Activated CD8-positive, alpha-beta T cell treated with anti-CD3 and anti-CD28 coated beads, Interleukin-2, amount 10 ng/mL, durations not matched to agents 7 days and 5 days (primary cell): ENCODE measurements at regions of chr12 and their contacts with region 1.

Region 1: GRCh38 chr12:1117970-1118563 is 127.0 kb downstream of the ERC1 start:
- DNase-seq: peak; percentile 81
- ATAC-seq: peak; percentile 43
- H3K4me3 Mint-ChIP-seq: no peak overlapping the region
- H3K27ac Mint-ChIP-seq: no peak overlapping the region
- H3K4me1 Mint-ChIP-seq: peaks cover 13% of the 10 kb centered on the region
- H3K27me3 Mint-ChIP-seq: no peaks in the 10 kb centered on the region

Region 2: DNA sequence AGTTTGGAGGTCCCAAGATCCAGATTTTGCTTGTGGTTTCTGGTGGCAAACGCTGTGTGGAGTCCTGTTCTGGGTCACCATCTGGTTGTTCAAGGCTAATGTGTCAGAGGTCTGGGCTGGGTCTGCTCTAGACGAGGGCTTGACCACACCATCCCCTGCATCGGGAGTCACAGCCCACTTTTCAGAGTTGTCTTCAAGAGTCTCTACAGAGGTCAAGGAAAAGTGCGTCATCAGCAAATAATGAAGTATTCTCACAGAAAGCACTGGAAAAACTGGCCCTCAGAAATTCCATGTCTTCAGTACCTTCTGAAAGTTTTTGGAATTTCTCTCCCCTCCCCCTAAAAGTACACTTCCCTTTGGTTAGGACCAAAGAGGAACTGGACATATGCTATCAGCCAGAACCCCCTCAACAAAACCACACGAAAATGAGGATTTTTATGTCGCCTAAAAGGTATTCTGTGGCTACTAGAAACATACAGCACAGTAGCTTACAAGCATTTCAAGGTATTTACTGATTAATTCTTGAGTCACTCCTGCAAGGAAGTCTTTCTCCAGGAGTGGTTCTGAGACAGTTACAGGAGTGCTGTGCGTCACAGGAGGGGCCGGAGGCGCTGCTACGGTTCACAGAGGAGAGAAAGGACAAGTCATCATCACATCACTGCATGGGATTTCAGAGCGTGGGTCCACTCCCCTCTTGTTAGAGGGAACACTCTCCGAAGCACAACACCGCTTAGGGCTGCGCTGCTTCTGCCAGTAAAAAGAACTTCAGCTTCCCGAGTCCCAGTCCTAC is 204.0 kb before region 1 on chr12:
- CTCF ChIA-PET with region 1: no interaction called
- POLR2A ChIA-PET with region 1: no interaction called
- DNase-seq: no peak
- ATAC-seq: no peak
- H3K4me3 Mint-ChIP-seq: no peak overlapping the region
- H3K27ac Mint-ChIP-seq: peak overlapping the region; percentile 81
- H3K4me1 Mint-ChIP-seq: peaks cover 31% of the 10 kb centered on the region
- H3K27me3 Mint-ChIP-seq: no peaks in the 10 kb centered on the region

Region 3: DNA sequence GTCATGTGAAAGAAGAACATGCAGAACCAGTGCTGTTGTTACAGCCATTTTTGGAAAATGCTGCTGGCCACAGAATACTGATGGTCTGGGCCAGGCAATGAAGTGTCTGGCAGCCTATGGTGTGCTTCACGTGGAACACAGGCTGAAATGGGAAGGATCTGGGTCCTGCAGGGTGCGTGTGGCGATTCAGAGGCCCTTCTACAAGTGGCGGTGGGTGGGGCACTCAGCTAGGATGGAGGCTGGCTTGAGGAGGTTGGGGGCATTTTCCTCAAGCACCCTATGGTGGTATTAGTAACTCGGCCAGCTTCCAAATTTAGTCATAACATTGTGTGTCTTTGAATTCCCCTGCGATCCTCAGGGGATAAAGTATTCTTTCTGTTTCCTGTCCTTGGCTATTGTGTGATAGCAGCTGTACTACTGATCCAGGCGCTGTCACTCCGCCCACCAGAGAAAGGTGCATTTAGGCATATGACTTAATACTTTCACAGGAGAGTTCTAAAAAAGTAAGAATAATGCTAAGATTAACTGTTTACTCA is 159.4 kb before region 1 on chr12:
- CTCF ChIA-PET with region 1: no interaction called
- POLR2A ChIA-PET with region 1: no interaction called
- DNase-seq: no peak
- ATAC-seq: no peak
- H3K4me3 Mint-ChIP-seq: no peak overlapping the region
- H3K27ac Mint-ChIP-seq: no peak overlapping the region
- H3K4me1 Mint-ChIP-seq: peaks cover 9% of the 10 kb centered on the region
- H3K27me3 Mint-ChIP-seq: no peaks in the 10 kb centered on the region

Region 4: GRCh38 chr12:1138691-1139090 is 20.6 kb after region 1 on chr12:
- CTCF ChIA-PET with region 1: interaction called, 12 read pairs
- POLR2A ChIA-PET with region 1: no interaction called
- DNase-seq: no peak
- ATAC-seq: no peak
- H3K4me3 Mint-ChIP-seq: no peak overlapping the region
- H3K27ac Mint-ChIP-seq: no peak overlapping the region
- H3K4me1 Mint-ChIP-seq: no peaks in the 10 kb centered on the region
- H3K27me3 Mint-ChIP-seq: no peaks in the 10 kb centered on the region

Region 5: GRCh38 chr12:1344245-1344644 is 226.2 kb after region 1 on chr12:
- CTCF ChIA-PET with region 1: interaction called, 12 read pairs
- POLR2A ChIA-PET with region 1: no interaction called
- DNase-seq: no peak
- ATAC-seq: no peak
- H3K4me3 Mint-ChIP-seq: no peak overlapping the region
- H3K27ac Mint-ChIP-seq: no peak overlapping the region
- H3K4me1 Mint-ChIP-seq: peaks cover 3% of the 10 kb centered on the region
- H3K27me3 Mint-ChIP-seq: no peaks in the 10 kb centered on the region

Region 6: GRCh38 chr12:1533602-1534304 is 415.7 kb after region 1 on chr12:
- CTCF ChIA-PET with region 1: interaction called, 16 read pairs
- POLR2A ChIA-PET with region 1: no interaction called
- DNase-seq: peak; percentile 74
- ATAC-seq: peak; percentile 67
- H3K4me3 Mint-ChIP-seq: peak overlapping the region; percentile 59
- H3K27ac Mint-ChIP-seq: peak overlapping the region; percentile 56
- H3K4me1 Mint-ChIP-seq: peaks cover 38% of the 10 kb centered on the region
- H3K27me3 Mint-ChIP-seq: peaks cover 69% of the 10 kb centered on the region

Region 7: GRCh38 chr12:1583421-1584078 is 465.5 kb after region 1 on chr12:
- CTCF ChIA-PET with region 1: interaction called, 300 read pairs
- POLR2A ChIA-PET with region 1: interaction called, 9 read pairs
- DNase-seq: peak; percentile 76
- ATAC-seq: peak; percentile 78
- H3K4me3 Mint-ChIP-seq: no peak overlapping the region
- H3K27ac Mint-ChIP-seq: no peak overlapping the region
- H3K4me1 Mint-ChIP-seq: peaks cover 18% of the 10 kb centered on the region
- H3K27me3 Mint-ChIP-seq: no peaks in the 10 kb centered on the region

Region 8: DNA sequence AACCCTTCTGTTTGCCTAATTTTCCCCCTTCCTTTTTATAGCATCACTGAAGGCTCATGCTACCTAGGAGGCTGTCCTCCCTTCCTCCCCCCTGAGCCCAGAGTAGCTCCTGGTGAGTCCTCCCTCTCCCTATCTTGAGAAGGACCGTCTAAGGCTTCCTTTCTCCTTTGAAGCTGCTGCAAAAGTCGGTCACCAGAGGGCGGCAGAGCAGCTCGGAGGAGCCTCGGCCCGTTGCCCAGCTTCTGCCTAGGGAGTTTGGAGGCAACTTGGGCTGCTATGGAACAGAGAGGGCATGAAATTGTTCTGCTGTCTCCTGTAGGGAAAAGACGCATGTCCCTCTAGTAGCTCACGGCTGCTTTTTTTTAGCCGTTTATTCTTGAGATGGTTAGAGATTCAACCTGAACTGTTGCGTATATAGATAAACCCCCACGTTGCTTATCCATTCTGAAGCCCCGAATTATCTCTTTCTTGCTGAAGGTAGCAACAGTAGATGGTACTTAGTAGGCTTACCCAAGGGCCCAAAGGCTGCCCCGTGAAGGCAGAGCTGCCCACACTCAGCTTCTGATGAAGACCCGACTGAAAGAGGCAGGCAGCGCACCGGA is 516.6 kb after region 1 on chr12:
- CTCF ChIA-PET with region 1: interaction called, 15 read pairs
- POLR2A ChIA-PET with region 1: no interaction called
- DNase-seq: peak; percentile 72
- ATAC-seq: peak; percentile 68
- H3K4me3 Mint-ChIP-seq: no peak overlapping the region
- H3K27ac Mint-ChIP-seq: no peak overlapping the region
- H3K4me1 Mint-ChIP-seq: peaks cover 8% of the 10 kb centered on the region
- H3K27me3 Mint-ChIP-seq: peaks cover 52% of the 10 kb centered on the region